ENCODE measurements at regions of chr12 and their contacts with region 1.

Region 1: DNA sequence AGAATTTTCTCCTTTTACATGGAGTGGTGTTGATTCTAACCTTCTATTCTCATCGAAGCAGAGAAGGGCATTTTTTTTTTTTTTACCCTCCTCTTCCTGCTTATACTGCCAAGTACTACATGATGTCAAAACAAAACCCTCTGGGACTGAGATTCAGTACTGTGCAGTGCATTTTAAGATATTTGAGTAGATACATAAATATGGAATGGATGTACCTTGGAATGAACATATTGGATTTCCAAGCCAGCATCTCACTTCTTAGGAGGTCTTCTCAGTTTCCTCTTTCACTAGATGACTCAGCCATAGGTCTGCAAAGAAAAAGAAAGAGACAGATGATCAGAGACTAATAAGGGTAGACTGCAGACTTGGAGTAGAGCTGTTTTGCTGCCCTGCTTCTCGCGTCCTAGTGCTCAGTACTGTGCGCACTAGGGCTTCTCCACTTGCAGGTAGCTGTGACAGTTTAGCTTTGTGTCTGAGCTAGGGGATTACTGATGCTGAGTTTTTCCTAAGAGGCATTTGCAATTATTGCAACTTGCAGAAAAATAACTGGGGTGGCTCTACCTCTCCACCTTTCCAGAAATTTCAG is 20.4 kb downstream of the TPH2 start:
- DNase-seq: peak; percentile 52
- H3K4me3 ChIP-seq: no peak overlapping the region
- H3K27ac ChIP-seq: no peak overlapping the region
- H3K4me1 ChIP-seq: peaks cover 22% of the 10 kb centered on the region
- H3K27me3 ChIP-seq: no peaks in the 10 kb centered on the region
- CTCF ChIP-seq: no peak

Region 2: GRCh38 chr12:71694099-71694820 is 264.8 kb before region 1 on chr12:
- CTCF ChIA-PET with region 1: no interaction called
- POLR2A ChIA-PET with region 1: no interaction called
- intact Hi-C with region 1: no loop called
- DNase-seq: no peak
- H3K4me3 ChIP-seq: no peak overlapping the region
- H3K27ac ChIP-seq: no peak overlapping the region
- H3K4me1 ChIP-seq: peaks cover 4% of the 10 kb centered on the region
- H3K27me3 ChIP-seq: no peaks in the 10 kb centered on the region
- CTCF ChIP-seq: no peak

Region 3: DNA sequence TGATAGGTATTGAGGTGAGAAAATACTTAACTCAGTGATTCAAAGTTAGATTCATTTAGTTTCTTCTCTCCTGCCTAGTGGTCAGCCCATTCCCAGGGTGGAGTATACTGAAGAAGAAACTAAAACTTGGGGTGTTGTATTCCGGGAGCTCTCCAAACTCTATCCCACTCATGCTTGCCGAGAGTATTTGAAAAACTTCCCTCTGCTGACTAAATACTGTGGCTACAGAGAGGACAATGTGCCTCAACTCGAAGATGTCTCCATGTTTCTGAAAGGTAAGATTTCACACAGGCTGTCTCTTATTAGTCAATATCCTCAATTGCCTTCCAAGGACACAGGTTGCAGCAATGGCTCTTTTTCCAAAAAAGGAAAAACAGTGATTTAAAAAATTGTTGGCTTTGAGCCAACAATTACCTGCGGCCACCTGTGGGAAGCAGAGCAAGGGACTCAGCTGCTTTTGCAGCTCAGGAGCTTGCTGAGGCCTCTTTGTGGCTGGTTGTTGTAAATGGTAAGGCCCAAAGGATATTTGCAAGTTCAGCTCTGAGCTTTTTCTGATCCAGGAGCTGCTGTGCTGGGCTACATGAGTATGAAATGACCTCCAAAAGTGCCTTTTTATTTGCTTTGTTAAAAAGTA is 13.5 kb after region 1 on chr12:
- CTCF ChIA-PET with region 1: no interaction called
- POLR2A ChIA-PET with region 1: interaction called, 25 read pairs
- intact Hi-C with region 1: loop called (anchors 2 kb)
- DNase-seq: no peak
- H3K4me3 ChIP-seq: no peak overlapping the region
- H3K27ac ChIP-seq: no peak overlapping the region
- H3K4me1 ChIP-seq: no peaks in the 10 kb centered on the region
- H3K27me3 ChIP-seq: no peaks in the 10 kb centered on the region
- CTCF ChIP-seq: no peak

Region 4: GRCh38 chr12:72485017-72485701 is 526.1 kb after region 1 on chr12:
- CTCF ChIA-PET with region 1: no interaction called
- POLR2A ChIA-PET with region 1: no interaction called
- intact Hi-C with region 1: no loop called
- DNase-seq: no peak
- H3K4me3 ChIP-seq: no peak overlapping the region
- H3K27ac ChIP-seq: no peak overlapping the region
- H3K4me1 ChIP-seq: no peaks in the 10 kb centered on the region
- H3K27me3 ChIP-seq: no peaks in the 10 kb centered on the region
- CTCF ChIP-seq: no peak

Measured in A673 (cell line).